ENCODE measurements at regions of chr11 and their contacts with region 1.

Region 1: GRCh38 chr11:19259487-19260345 is 19.0 kb upstream of the E2F8 start:
- DNase-seq: peak; percentile 2
- H3K4me3 ChIP-seq: no peak overlapping the region
- H3K27me3 ChIP-seq: peaks cover 8% of the 10 kb centered on the region
- CTCF ChIP-seq: peak; percentile 96

Region 2: DNA sequence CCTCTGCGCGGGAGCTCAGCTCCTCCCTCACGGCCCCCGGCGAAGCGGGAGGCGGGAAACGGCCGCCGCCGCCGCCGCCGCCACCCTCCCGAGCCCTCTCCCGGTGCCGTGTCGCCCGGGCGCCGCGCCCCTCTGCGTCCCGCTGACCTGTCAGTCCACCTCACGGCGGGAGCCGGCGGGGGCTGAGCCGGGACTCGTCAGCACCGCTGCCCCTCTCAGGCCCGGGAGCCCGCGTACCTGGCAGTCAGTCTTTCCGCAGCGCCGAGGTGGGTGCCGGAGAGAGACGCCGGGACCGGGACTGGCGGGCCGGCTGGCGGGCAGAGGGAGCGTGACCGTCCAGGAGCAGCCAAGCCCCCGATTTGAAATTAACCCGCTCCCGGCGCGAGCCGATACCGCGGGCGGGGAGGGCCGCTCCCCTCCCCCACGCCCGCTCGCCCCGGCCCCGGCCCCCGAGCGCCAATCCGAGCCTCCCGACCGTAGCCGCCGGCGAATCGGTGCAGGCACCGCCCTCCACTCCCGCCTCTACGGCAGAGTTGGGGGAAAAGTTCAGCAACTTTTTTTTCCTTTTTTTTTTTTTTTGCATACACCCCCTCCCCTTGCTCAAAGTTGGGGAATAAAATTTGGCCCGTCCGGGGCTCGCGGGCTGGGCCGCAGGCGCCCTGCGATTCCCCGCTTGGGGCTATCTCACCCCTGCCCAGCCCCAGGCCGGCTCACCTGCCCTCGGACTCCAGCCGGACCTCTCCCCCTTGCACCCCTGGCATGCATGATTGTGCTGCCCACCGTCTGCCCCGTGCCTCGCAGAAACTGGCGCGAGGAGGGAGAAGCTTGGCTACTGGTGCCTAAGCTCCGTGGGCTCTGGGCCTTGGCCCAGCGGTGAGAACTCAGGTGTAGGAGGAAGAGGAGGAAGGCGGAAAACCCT is 18.2 kb before region 1 on chr11:
- CTCF ChIA-PET with region 1: interaction called, 20 read pairs
- POLR2A ChIA-PET with region 1: no interaction called
- DNase-seq: no peak
- H3K4me3 ChIP-seq: peak overlapping the region; percentile 60
- H3K27me3 ChIP-seq: peaks cover 16% of the 10 kb centered on the region; the same call in 1 of the 2 replicates
- CTCF ChIP-seq: no peak

Region 3: DNA sequence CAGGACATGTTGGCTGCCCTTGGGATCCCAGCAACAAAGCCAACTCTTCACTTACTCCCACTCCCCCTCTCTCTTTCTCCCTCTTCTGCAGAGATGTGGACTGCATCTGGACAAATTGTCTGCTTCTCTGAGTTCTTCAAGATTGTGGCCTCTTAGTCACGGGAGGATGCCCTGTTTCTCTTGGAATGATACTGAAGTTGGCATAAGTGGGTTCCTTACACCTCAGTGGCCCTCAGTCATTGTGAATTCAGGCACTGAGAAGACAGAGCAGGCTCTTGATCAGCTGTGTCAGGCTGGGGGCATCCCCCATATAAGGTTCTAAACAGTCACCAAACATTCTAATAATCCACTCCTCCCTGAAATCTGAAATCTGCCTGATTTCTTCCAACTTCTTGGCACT is 12.9 kb before region 1 on chr11:
- CTCF ChIA-PET with region 1: interaction called, 20 read pairs
- POLR2A ChIA-PET with region 1: no interaction called
- DNase-seq: no peak
- H3K4me3 ChIP-seq: no peak overlapping the region
- H3K27me3 ChIP-seq: peaks cover 17% of the 10 kb centered on the region
- CTCF ChIP-seq: no peak

Region 4: GRCh38 chr11:19281041-19281440 is 21.3 kb after region 1 on chr11:
- CTCF ChIA-PET with region 1: interaction called, 11 read pairs
- POLR2A ChIA-PET with region 1: no interaction called
- DNase-seq: no peak
- H3K4me3 ChIP-seq: no peak overlapping the region
- H3K27me3 ChIP-seq: peaks cover 2% of the 10 kb centered on the region; the same call in 1 of the 2 replicates
- CTCF ChIP-seq: no peak